WTC11 (cell line): ENCODE measurements at regions of chr19 and their contacts with region 1.

Region 1: DNA sequence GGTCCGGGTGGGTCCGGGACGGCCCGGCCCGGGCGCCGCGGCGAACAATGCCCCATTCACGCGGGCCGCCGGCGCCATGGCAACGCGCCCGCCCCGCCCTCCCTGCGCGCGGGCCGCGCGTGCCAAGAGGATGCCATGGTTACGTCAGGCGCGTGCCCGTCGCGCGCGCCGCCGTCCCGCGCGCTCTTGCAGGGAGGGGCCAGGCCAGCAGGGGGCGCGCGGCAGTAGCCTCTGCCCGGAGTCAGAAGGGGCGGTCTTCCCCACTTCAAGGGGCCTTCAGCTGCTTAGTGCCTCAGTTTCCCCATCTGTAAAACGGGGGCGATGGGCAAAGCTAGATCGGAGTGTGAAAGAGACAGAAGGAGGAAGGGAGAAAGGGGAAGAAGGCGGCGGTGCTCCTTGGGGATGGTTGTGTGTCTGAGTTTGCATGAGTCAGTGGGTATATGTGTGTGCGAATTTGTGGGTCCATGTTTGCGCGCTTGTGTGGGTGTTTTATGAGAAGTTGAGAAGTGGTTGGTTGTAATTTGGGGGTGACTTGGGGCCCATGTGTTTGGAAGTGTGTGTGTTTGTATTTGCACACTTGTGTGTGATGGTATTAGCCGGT is 11.6 kb upstream of the NFIX start:
- DNase-seq: peak; percentile 81
- ATAC-seq: peak; percentile 76
- H3K4me3 Mint-ChIP-seq: no peak overlapping the region
- H3K27ac Mint-ChIP-seq: no peak overlapping the region
- H3K4me1 Mint-ChIP-seq: peaks cover 6% of the 10 kb centered on the region; the same call in 1 of the 2 replicates
- H3K27me3 Mint-ChIP-seq: peaks cover 39% of the 10 kb centered on the region
- CTCF ChIP-seq: peak; percentile 94

Region 2: DNA sequence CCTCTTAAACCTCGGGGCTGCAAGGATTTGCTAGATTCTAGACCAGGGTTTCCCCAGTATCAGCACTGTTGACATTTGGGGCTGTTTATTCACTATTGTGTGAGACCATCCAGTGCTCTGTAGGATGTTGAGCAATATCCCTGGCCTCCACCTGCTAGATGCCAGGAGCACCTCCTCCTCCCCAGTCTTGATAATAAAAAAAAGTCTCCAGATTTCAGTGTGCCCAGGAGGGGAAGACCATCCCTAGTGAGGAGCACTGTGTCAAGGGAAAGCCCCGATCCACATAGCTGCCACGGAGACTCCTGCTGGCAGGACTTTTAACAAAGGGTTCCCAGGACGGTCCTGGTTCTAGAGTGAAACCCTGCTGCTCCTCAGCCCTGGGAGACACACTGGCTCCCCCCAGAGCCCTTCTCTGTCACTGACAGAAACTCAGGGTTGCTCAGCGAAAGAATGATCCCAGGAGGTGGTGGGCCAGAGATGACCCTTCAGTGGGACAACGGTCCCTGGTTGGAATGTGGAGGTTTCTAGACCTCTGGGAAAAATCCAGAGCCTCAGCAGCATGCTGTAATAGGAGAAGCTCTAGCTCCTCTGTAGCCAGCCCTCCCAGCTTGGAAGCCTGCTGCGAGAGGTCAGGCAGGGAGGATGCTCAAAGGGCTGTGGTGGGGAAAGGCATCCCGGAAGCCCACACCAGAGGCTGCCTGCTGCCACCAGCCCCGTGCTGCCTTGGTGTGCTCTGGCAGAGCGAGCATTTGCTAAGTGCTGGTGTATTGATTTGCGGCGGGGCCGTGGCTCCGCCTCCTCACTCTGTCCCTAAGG is 98.8 kb after region 1 on chr19:
- CTCF ChIA-PET with region 1: interaction called, 38 read pairs
- POLR2A ChIA-PET with region 1: no interaction called
- DNase-seq: peak; percentile 60
- ATAC-seq: peak; percentile 67
- H3K4me3 Mint-ChIP-seq: peak overlapping the region; percentile 40; the same call in 1 of the 2 replicates
- H3K27ac Mint-ChIP-seq: no peak overlapping the region
- H3K4me1 Mint-ChIP-seq: peaks cover 37% of the 10 kb centered on the region
- H3K27me3 Mint-ChIP-seq: peaks cover 19% of the 10 kb centered on the region
- CTCF ChIP-seq: no peak

Region 3: DNA sequence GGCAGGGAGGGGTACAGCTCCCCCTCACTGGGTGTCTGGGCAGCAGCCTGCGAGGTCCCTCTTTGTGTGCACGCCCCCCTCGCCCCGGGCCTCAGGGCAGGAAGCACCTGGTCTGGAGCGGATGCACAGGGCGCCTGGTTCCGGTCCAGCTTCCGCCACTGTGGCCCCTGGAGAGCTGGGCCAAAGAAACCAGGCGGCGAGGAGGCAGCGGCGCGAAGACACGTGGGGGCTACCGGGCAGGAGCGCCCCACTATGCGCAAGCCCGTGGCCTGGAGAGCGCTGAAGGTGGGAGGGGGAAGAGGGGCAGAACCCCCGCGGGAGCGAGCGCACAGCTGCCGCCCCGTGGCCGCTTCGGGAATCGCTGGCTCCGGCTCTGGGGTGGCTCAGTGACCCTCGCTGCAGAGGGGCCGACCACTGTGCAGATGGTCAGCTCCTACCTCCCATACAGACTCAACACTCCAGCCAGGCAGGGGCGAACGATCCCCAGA is 120.8 kb after region 1 on chr19:
- CTCF ChIA-PET with region 1: interaction called, 29 read pairs
- POLR2A ChIA-PET with region 1: interaction called, 4 read pairs
- DNase-seq: peak; percentile 82
- ATAC-seq: peak; percentile 57
- H3K4me3 Mint-ChIP-seq: no peak overlapping the region
- H3K27ac Mint-ChIP-seq: no peak overlapping the region; the same call in 1 of the 2 replicates
- H3K4me1 Mint-ChIP-seq: peaks cover 4% of the 10 kb centered on the region
- H3K27me3 Mint-ChIP-seq: peaks cover 30% of the 10 kb centered on the region
- CTCF ChIP-seq: peak; percentile 73